Activated T-helper 1 cell treated with anti-CD3 and anti-CD28 coated beads, Interleukin-12 subunit alpha, Interleukin-12 subunit beta, Interleukin-2, Interleukin-4 antibody, amounts not matched to agents 30 ng/mL and 10 ng/mL and 1 ng/mL, durations not matched to agents 14 hours and 24 hours and 36 hours (primary cell): ENCODE measurements at regions of chr12 and their contacts with region 1.

Region 1: DNA sequence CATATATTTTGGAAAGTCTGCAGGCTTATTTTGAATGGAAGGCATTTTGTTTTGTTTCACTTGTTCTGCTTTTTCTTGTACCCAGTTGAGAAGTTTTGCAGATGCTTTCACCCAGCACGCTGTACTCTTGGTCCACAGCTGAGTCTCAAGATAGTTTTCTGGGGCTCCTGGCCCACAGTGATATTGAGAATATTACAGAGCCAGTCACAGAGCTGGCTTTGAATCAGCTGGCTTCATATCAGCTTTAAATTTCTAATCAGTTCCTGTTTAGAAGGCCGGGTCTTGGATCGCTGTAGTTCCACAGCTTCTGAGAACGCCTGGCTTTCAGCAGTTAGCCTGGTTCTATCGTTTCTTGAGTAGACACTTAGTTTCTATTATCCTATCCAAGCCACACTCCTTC is 32.5 kb upstream of the PARP11 start:
- DNase-seq: no peak
- H3K4me3 Mint-ChIP-seq: peak overlapping the region; percentile 50
- H3K27ac Mint-ChIP-seq: no peak overlapping the region
- H3K4me1 Mint-ChIP-seq: peaks cover 33% of the 10 kb centered on the region
- H3K27me3 Mint-ChIP-seq: no peaks in the 10 kb centered on the region

Region 2: GRCh38 chr12:3445119-3445978 is 460.3 kb before region 1 on chr12:
- intact Hi-C with region 1: no loop called
- DNase-seq: no peak
- H3K4me3 Mint-ChIP-seq: no peak overlapping the region
- H3K27ac Mint-ChIP-seq: no peak overlapping the region
- H3K4me1 Mint-ChIP-seq: no peaks in the 10 kb centered on the region
- H3K27me3 Mint-ChIP-seq: peaks cover 5% of the 10 kb centered on the region

Region 3: GRCh38 chr12:3964439-3964838 is 58.8 kb after region 1 on chr12:
- intact Hi-C with region 1: loop called (anchors 5 kb)
- DNase-seq: no peak
- H3K4me3 Mint-ChIP-seq: no peak overlapping the region
- H3K27ac Mint-ChIP-seq: no peak overlapping the region
- H3K4me1 Mint-ChIP-seq: peaks cover 18% of the 10 kb centered on the region
- H3K27me3 Mint-ChIP-seq: peaks cover 1% of the 10 kb centered on the region

Region 4: DNA sequence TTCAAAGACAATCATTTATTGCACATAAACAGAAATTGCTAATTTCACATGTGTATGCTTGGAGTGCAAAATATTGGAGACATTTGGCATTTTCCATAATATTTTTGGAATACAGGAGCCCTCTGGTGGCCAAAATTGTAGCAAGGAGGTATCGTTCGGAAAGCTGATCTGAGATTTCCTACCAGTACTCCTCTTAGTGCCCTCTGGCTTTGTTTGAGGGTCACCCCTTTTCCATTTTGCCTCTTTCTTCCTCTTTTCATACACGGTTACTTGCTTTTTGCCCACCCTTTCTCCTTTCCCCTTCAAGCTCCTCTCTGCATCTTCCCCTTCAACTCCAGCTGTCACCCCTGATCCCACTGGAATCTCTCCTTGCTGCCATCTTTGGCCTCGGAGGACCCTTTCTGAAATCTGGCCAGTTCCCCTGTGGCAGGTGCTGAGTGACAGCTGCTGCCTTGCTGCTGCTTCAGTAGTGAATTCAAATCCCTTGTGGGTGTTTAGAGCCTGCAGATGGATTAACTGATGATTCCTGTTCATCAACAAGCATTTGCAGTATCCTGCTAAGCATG is 132.2 kb after region 1 on chr12:
- intact Hi-C with region 1: no loop called
- DNase-seq: no peak
- H3K4me3 Mint-ChIP-seq: no peak overlapping the region
- H3K27ac Mint-ChIP-seq: no peak overlapping the region
- H3K4me1 Mint-ChIP-seq: peaks cover 6% of the 10 kb centered on the region
- H3K27me3 Mint-ChIP-seq: peaks cover 27% of the 10 kb centered on the region